ENCODE measurements at regions of chr21 and their contacts with region 1.

Region 1: GRCh38 chr21:42258153-42258884 is 39.4 kb downstream of the ABCG1 start:
- DNase-seq: peak; percentile 85
- ATAC-seq: peak; percentile 96
- H3K4me3 ChIP-seq: no peak overlapping the region
- H3K4me3 Mint-ChIP-seq: no peak overlapping the region
- H3K27ac ChIP-seq: no peak overlapping the region
- H3K27ac Mint-ChIP-seq: no peak overlapping the region
- H3K4me1 ChIP-seq: peaks cover 37 to 53% of the 10 kb centered on the region in 2 donors
- H3K4me1 Mint-ChIP-seq: peaks cover 48% of the 10 kb centered on the region
- H3K27me3 ChIP-seq: peaks cover 0 to 3% (median 0%) of the 10 kb centered on the region in 4 experiments
- H3K27me3 Mint-ChIP-seq: no peaks in the 10 kb centered on the region
- CTCF ChIP-seq: peak; percentile 89

Region 2: GRCh38 chr21:41207401-41208068 is 1050.8 kb before region 1 on chr21:
- CTCF ChIA-PET with region 1: no interaction called
- POLR2A ChIA-PET with region 1: no interaction called
- intact Hi-C with region 1: no loop called
- DNase-seq: no peak
- ATAC-seq: no peak
- H3K4me3 ChIP-seq: no peak overlapping the region
- H3K4me3 Mint-ChIP-seq: no peak overlapping the region
- H3K27ac ChIP-seq: no peak overlapping the region
- H3K27ac Mint-ChIP-seq: no peak overlapping the region
- H3K4me1 ChIP-seq: peaks cover 0 to 5% of the 10 kb centered on the region in 2 donors
- H3K4me1 Mint-ChIP-seq: peaks cover 7% of the 10 kb centered on the region
- H3K27me3 ChIP-seq: no peaks in the 10 kb centered on the region
- H3K27me3 Mint-ChIP-seq: no peaks in the 10 kb centered on the region
- CTCF ChIP-seq: no peak

Region 3: DNA sequence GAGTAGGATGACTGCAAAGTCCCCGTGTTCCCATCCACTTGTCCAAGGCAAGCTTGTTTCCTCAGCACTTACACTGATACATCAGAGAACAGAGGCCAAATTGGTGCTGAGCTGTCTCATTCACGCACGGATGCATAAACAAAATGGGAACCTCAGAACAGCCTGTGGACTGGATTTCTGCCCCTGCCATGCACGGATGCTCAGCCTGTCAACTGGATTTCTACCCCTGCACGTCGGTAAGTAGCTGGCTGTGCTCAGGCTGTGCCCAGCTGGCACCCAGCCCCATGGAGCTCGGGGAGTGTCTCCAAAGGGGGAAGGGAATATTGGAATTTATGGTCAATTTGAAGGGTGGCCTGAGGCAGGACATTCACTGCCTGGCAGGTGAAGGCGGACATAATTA is 709.5 kb before region 1 on chr21:
- CTCF ChIA-PET with region 1: no interaction called
- POLR2A ChIA-PET with region 1: no interaction called
- intact Hi-C with region 1: no loop called
- DNase-seq: no peak
- ATAC-seq: no peak
- H3K4me3 ChIP-seq: no peak overlapping the region
- H3K4me3 Mint-ChIP-seq: no peak overlapping the region
- H3K27ac ChIP-seq: no peak overlapping the region
- H3K27ac Mint-ChIP-seq: no peak overlapping the region
- H3K4me1 ChIP-seq: peaks cover 0 to 4% of the 10 kb centered on the region in 2 donors
- H3K4me1 Mint-ChIP-seq: peaks cover 6% of the 10 kb centered on the region
- H3K27me3 ChIP-seq: no peaks in the 10 kb centered on the region
- H3K27me3 Mint-ChIP-seq: peaks cover 27% of the 10 kb centered on the region
- CTCF ChIP-seq: no peak

Region 4: GRCh38 chr21:41816220-41817165 is 441.8 kb before region 1 on chr21:
- CTCF ChIA-PET with region 1: interaction called, 12 read pairs
- POLR2A ChIA-PET with region 1: no interaction called
- intact Hi-C with region 1: no loop called
- DNase-seq: peak; percentile 76
- ATAC-seq: peak; percentile 95
- H3K4me3 ChIP-seq: no peak overlapping the region
- H3K4me3 Mint-ChIP-seq: no peak overlapping the region
- H3K27ac ChIP-seq: no peak overlapping the region
- H3K27ac Mint-ChIP-seq: no peak overlapping the region
- H3K4me1 ChIP-seq: peaks cover 0 to 5% of the 10 kb centered on the region in 2 donors
- H3K4me1 Mint-ChIP-seq: peaks cover 8% of the 10 kb centered on the region
- H3K27me3 ChIP-seq: no peaks in the 10 kb centered on the region
- H3K27me3 Mint-ChIP-seq: no peaks in the 10 kb centered on the region
- CTCF ChIP-seq: peak; percentile 85

Region 5: GRCh38 chr21:42156690-42157577 is 101.4 kb before region 1 on chr21:
- CTCF ChIA-PET with region 1: interaction called, 12 read pairs
- POLR2A ChIA-PET with region 1: no interaction called
- intact Hi-C with region 1: no loop called
- DNase-seq: no peak
- ATAC-seq: no peak
- H3K4me3 ChIP-seq: no peak overlapping the region
- H3K4me3 Mint-ChIP-seq: no peak overlapping the region
- H3K27ac ChIP-seq: no peak overlapping the region
- H3K27ac Mint-ChIP-seq: no peak overlapping the region
- H3K4me1 ChIP-seq: peaks cover 6 to 9% of the 10 kb centered on the region in 2 donors
- H3K4me1 Mint-ChIP-seq: peaks cover 9% of the 10 kb centered on the region
- H3K27me3 ChIP-seq: peaks cover 0 to 20% (median 4%) of the 10 kb centered on the region in 4 experiments
- H3K27me3 Mint-ChIP-seq: peaks cover 41% of the 10 kb centered on the region
- CTCF ChIP-seq: no peak

Region 6: DNA sequence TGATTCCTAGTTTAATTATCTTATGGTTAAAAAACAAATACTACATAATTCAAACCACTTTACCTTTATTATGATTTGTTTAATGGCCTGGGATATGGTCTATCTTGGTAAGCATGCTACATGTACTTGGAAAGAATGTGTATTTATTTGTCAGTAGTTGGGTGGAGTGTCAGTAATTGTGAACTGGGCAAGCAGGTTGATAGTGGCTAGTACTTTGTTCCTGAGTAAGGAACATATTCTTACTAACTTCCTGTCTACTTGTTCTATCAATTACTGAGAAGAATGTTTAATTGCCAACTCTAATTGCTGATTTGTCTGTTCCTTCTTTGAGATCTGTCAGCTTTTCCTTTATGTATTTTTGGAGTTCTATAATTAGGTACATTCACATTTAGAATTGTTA is 88.6 kb before region 1 on chr21:
- CTCF ChIA-PET with region 1: interaction called, 148 read pairs
- POLR2A ChIA-PET with region 1: no interaction called
- intact Hi-C with region 1: loop called (anchors 1 kb)
- DNase-seq: no peak
- ATAC-seq: no peak
- H3K4me3 ChIP-seq: no peak overlapping the region
- H3K4me3 Mint-ChIP-seq: no peak overlapping the region
- H3K27ac ChIP-seq: no peak overlapping the region
- H3K27ac Mint-ChIP-seq: no peak overlapping the region
- H3K4me1 ChIP-seq: peaks cover 0 to under 1% of the 10 kb centered on the region in 2 donors
- H3K4me1 Mint-ChIP-seq: no peaks in the 10 kb centered on the region
- H3K27me3 ChIP-seq: no peaks in the 10 kb centered on the region
- H3K27me3 Mint-ChIP-seq: no peaks in the 10 kb centered on the region
- CTCF ChIP-seq: no peak

Region 7: DNA sequence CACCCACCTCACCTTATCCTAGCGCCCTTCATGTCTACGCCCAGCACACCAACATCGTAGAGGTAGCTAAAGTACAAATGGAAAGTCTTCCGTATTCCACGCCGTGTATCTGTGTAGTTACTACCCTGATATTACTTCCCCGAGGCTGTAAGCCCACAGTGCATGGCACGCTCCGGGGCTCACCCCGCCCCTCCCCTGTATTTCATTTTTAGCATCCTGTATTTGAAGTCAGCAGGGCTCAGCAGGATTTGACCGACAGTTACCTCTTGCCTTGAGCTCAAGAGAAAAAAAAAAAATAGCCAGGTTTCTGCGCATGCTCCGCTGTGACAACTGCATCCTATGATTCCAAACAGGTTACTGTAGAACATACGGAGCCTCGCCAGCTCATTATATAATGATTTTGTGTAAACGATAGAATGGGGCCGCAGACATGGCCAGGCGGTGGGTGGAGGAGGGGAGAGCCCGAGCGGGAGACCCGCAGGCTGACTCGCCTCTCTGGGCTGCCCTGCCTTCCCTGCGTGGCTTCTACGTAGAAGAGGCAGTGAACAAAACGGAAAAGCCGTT is 38.1 kb before region 1 on chr21:
- CTCF ChIA-PET with region 1: interaction called, 19 read pairs
- POLR2A ChIA-PET with region 1: no interaction called
- intact Hi-C with region 1: no loop called
- DNase-seq: peak; percentile 94
- ATAC-seq: peak; percentile 85
- H3K4me3 ChIP-seq: peak overlapping the region; percentile 72 to 92 (median 89)
- H3K4me3 Mint-ChIP-seq: peak overlapping the region; percentile 87
- H3K27ac ChIP-seq: peak overlapping the region; percentile 75 to 96
- H3K27ac Mint-ChIP-seq: peak overlapping the region; percentile 80
- H3K4me1 ChIP-seq: peaks cover 29 to 41% of the 10 kb centered on the region in 2 donors
- H3K4me1 Mint-ChIP-seq: peaks cover 47% of the 10 kb centered on the region
- H3K27me3 ChIP-seq: no peaks in the 10 kb centered on the region
- H3K27me3 Mint-ChIP-seq: no peaks in the 10 kb centered on the region
- CTCF ChIP-seq: no peak

Region 8: DNA sequence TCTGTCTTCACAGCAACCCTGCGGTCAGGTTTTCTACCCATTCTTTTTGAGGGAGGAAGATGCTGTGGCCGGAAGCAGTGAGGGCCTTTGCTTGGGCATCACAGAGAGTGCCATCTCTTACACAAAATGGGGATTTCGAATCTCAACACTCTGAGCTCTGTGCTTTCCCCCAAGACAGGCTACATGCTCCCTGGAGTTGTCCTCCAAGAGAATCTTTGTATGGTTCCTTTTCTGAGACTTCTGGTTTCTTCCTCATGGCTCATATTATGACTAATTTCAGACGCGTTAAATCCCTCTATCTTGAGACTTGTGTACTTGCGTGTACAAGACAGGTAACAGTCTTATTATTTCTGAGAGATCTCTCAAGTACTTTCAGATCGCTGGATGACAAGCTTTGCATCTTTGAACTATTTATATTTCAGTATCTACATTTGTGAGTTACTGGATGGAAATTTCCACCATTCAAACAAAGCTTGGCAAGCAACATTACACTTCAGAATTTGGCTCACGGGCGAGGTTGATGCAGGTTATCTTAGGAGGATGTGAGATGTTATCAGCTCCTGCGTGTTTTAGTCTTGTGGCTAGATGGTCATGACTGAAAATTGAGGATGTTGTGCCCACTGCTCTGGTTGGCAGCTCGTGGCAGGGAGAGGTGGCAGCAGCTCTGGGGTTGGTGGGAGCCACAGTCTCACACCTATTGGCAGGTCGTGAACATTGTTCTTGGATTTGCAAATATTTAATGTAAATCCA is 20.0 kb before region 1 on chr21:
- CTCF ChIA-PET with region 1: interaction called, 32 read pairs
- POLR2A ChIA-PET with region 1: interaction called, 5 read pairs
- intact Hi-C with region 1: no loop called
- DNase-seq: peak; percentile 48
- ATAC-seq: no peak
- H3K4me3 ChIP-seq: no peak overlapping the region
- H3K4me3 Mint-ChIP-seq: peak overlapping the region; percentile 49
- H3K27ac ChIP-seq: no peak overlapping the region
- H3K27ac Mint-ChIP-seq: peak overlapping the region; percentile 10
- H3K4me1 ChIP-seq: peaks cover 65 to 77% of the 10 kb centered on the region in 2 donors
- H3K4me1 Mint-ChIP-seq: peaks cover 75% of the 10 kb centered on the region
- H3K27me3 ChIP-seq: no peaks in the 10 kb centered on the region
- H3K27me3 Mint-ChIP-seq: no peaks in the 10 kb centered on the region
- CTCF ChIP-seq: no peak

Region 9: GRCh38 chr21:42309753-42310221 is 51.5 kb after region 1 on chr21:
- CTCF ChIA-PET with region 1: interaction called, 10 read pairs
- POLR2A ChIA-PET with region 1: no interaction called
- intact Hi-C with region 1: no loop called
- DNase-seq: peak; percentile 75
- ATAC-seq: peak; percentile 76
- H3K4me3 ChIP-seq: no peak overlapping the region
- H3K4me3 Mint-ChIP-seq: no peak overlapping the region
- H3K27ac ChIP-seq: no peak overlapping the region
- H3K27ac Mint-ChIP-seq: no peak overlapping the region
- H3K4me1 ChIP-seq: peaks cover 7 to 14% of the 10 kb centered on the region in 2 donors
- H3K4me1 Mint-ChIP-seq: peaks cover 4% of the 10 kb centered on the region
- H3K27me3 ChIP-seq: peaks cover 0 to 42% (median 13%) of the 10 kb centered on the region in 4 experiments
- H3K27me3 Mint-ChIP-seq: peaks cover 26% of the 10 kb centered on the region
- CTCF ChIP-seq: peak; percentile 89

Measured in B cell (primary cell).